ENCODE measurements at regions of chr6 and their contacts with region 1.

Region 1: DNA sequence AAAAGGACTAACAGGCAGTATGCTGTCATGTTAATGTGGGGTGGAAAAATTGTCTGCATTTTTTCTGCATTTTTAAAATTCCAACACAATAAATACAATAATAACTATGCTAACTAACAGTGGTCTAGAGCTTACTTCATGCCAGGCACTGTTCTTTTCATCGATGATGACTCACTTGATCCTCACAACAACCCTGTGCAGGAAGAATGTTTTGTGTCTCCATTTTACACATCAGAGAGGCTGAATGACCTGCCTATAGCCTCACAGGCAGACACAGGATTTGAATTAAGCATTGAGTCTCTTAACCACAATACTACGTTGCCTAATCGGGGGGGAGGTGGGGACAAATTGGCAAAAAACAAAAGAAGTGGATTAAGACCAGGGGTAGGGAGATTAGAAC is 26.9 kb upstream of the FANCE start:
- DNase-seq: peak; percentile 92
- H3K4me3 ChIP-seq: no peak overlapping the region
- H3K27ac ChIP-seq: peak overlapping the region; percentile 98
- H3K4me1 ChIP-seq: peaks cover 48% of the 10 kb centered on the region
- H3K27me3 ChIP-seq: no peaks in the 10 kb centered on the region
- CTCF ChIP-seq: no peak
- POLR2A ChIP-seq: no peak

Region 2: GRCh38 chr6:35370124-35370741 is 55.1 kb before region 1 on chr6:
- CTCF ChIA-PET with region 1: interaction called, 3 read pairs
- POLR2A ChIA-PET with region 1: no interaction called
- dilution Hi-C with region 1: no loop called
- intact Hi-C with region 1: loop called (anchors 1 kb)
- DNase-seq: peak; percentile 83
- H3K4me3 ChIP-seq: no peak overlapping the region
- H3K27ac ChIP-seq: peak overlapping the region; percentile 82
- H3K4me1 ChIP-seq: peaks cover 34% of the 10 kb centered on the region
- H3K27me3 ChIP-seq: no peaks in the 10 kb centered on the region
- CTCF ChIP-seq: no peak
- POLR2A ChIP-seq: no peak

Region 3: GRCh38 chr6:35391240-35391968 is 33.9 kb before region 1 on chr6:
- CTCF ChIA-PET with region 1: interaction called, 3 read pairs
- POLR2A ChIA-PET with region 1: no interaction called
- dilution Hi-C with region 1: no loop called
- intact Hi-C with region 1: loop called (anchors 1 kb)
- DNase-seq: peak; percentile 88
- H3K4me3 ChIP-seq: no peak overlapping the region
- H3K27ac ChIP-seq: peak overlapping the region; percentile 93
- H3K4me1 ChIP-seq: peaks cover 38% of the 10 kb centered on the region
- H3K27me3 ChIP-seq: no peaks in the 10 kb centered on the region
- CTCF ChIP-seq: no peak
- POLR2A ChIP-seq: peak; percentile 42

Region 4: GRCh38 chr6:35569011-35569461 is 143.8 kb after region 1 on chr6:
- CTCF ChIA-PET with region 1: no interaction called
- POLR2A ChIA-PET with region 1: no interaction called
- dilution Hi-C with region 1: no loop called
- intact Hi-C with region 1: no loop called
- DNase-seq: no peak
- H3K4me3 ChIP-seq: no peak overlapping the region
- H3K27ac ChIP-seq: no peak overlapping the region
- H3K4me1 ChIP-seq: no peaks in the 10 kb centered on the region
- H3K27me3 ChIP-seq: peaks cover 12% of the 10 kb centered on the region in 2 experiments
- CTCF ChIP-seq: peak; percentile 44 to 68
- POLR2A ChIP-seq: no peak

Region 5: DNA sequence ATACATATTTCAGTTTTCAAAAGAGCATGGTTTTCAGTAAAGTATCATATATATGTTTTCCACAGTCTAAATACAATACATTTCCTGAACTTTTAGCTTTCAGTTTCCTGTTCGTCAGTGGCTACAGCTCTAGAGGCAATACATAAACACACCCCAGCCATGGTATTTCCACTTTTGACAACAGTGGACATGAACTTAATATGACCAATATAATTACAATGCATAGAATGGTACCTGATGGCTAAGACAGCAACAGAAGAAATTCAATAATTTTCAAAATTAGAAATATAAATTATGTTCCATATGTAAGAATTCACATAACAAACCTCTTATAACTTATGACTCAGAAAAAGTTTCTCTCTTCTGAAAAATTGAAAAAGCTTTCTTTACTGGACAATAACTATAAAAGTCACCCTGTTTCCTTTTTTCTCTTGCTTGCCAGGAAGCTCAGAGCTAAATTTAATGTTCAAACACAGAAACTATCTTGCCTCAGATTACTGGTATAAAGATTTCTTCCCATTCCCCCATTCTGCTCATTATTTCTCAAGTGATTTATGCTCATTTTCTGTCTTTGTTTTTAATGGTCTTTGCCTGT is 244.3 kb after region 1 on chr6:
- CTCF ChIA-PET with region 1: no interaction called
- POLR2A ChIA-PET with region 1: no interaction called
- dilution Hi-C with region 1: no loop called
- intact Hi-C with region 1: loop called (anchors 5 kb)
- DNase-seq: peak; percentile 94
- H3K4me3 ChIP-seq: peak overlapping the region in 2 of 3 experiments; percentile 2 to 59
- H3K27ac ChIP-seq: peak overlapping the region; percentile 95
- H3K4me1 ChIP-seq: peaks cover 51% of the 10 kb centered on the region
- H3K27me3 ChIP-seq: no peaks in the 10 kb centered on the region
- CTCF ChIP-seq: no peak
- POLR2A ChIP-seq: no peak

Region 6: GRCh38 chr6:36204068-36204753 is 778.9 kb after region 1 on chr6:
- CTCF ChIA-PET with region 1: no interaction called
- POLR2A ChIA-PET with region 1: no interaction called
- dilution Hi-C with region 1: no loop called
- intact Hi-C with region 1: no loop called
- DNase-seq: no peak
- H3K4me3 ChIP-seq: no peak overlapping the region
- H3K27ac ChIP-seq: no peak overlapping the region
- H3K4me1 ChIP-seq: no peaks in the 10 kb centered on the region
- H3K27me3 ChIP-seq: no peaks in the 10 kb centered on the region
- CTCF ChIP-seq: no peak
- POLR2A ChIP-seq: no peak